HAP-1 (cell line): ENCODE measurements at regions of chr10 and their contacts with region 1.

Region 1: GRCh38 chr10:7410862-7411670 is at the start of gene SFMBT2:
- DNase-seq: peak; percentile 62 to 72
- H3K4me3 ChIP-seq: peak within 1 kb of the TSS; percentile 75
- H3K4me1 ChIP-seq: no peaks in the 10 kb centered on the region; the same call in 1 of the 2 replicates
- H3K27me3 ChIP-seq: no peaks in the 10 kb centered on the region

Region 2: DNA sequence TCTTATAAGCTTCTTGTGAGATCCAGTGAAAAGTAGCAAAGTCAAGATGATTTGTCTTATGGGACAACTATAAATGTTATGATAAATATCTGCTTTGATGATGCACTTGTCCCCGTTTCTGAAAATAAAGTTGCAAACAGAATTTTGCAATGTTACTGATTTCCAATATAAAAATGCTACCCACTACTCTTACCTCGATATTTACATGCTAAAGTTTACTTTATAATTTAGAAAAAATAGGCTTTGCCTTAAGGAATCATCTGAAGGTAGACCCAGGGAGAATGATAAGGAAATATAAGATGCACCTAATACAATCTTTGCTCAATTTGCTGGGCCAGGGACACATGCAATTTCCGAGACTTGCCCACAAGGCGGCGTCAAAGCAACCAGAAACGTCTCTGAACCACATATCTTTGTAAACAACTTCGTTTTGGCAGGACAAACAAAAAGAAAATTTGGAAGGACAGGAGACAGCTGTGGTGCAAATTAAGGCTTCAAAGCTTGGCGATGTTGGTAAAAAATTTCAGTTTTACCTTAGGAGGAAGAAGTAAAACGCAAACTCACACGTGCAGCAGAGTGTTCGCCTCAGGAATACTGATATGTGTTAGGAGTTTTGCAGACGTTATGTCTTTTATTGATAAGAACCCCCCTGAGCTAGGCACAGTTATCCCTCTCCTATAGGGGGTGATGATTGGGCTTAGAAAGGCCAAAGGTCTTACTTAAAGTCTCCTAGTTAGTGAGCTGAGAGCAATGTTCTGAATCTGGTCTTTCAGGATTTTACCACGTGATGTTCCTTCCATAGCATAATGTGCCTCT is 965.4 kb before region 1 on chr10:
- in situ Hi-C with region 1: loop called (anchors 25 kb)
- DNase-seq: peak; percentile 27 to 58
- H3K4me3 ChIP-seq: no peak overlapping the region
- H3K4me1 ChIP-seq: no peaks in the 10 kb centered on the region
- H3K27me3 ChIP-seq: no peaks in the 10 kb centered on the region

Region 3: GRCh38 chr10:6678211-6678803 is 732.8 kb before region 1 on chr10:
- in situ Hi-C with region 1: loop called (anchors 10 kb)
- DNase-seq: peak; percentile 60 to 79
- H3K4me3 ChIP-seq: no peak overlapping the region
- H3K4me1 ChIP-seq: peaks cover 3% of the 10 kb centered on the region; the same call in 1 of the 2 replicates
- H3K27me3 ChIP-seq: peaks cover 13% of the 10 kb centered on the region

Region 4: GRCh38 chr10:6920072-6921019 is 490.7 kb before region 1 on chr10:
- in situ Hi-C with region 1: loop called (anchors 25 kb)
- DNase-seq: peak; percentile 76 to 87
- H3K4me3 ChIP-seq: no peak overlapping the region
- H3K4me1 ChIP-seq: peaks cover 8% of the 10 kb centered on the region
- H3K27me3 ChIP-seq: no peaks in the 10 kb centered on the region

Region 5: DNA sequence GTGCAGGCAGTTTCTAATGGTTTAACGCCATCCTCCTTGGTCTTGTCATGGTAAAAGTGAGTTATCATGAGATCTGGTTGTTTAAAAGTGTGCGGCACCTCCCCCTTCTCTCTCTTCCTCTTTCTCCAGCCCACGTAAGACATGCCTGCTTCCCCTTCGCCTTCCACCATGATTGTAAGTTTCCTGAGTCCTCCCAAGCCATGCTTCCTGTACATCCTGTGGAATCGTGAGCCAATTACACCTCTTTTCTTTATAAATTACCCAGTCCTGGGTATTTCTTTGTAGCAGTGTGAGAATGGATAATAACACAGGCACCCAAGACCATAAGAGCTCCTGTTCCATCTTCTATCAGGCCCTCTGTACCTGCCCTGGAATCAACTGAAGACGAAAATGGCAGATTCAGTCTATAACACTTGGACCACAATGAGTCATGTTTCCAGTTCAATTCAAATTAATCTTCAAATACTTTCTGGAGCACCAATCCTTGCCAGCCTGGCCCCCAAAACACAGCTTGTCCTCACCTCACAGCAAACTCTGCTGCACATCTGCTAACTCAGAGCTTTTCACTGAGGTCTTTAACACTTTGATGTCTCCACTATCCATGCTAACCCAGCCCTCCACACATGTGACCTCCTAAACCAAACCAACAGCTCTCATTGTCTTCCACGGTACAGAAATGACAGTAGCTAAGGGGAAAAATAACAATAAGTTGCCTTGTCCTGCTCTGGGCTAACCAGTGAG is 73.5 kb before region 1 on chr10:
- in situ Hi-C with region 1: no loop called
- DNase-seq: no peak
- H3K4me3 ChIP-seq: no peak overlapping the region
- H3K4me1 ChIP-seq: peaks cover 5% of the 10 kb centered on the region
- H3K27me3 ChIP-seq: no peaks in the 10 kb centered on the region

Region 6: GRCh38 chr10:8006274-8006999 is 595.4 kb after region 1 on chr10:
- in situ Hi-C with region 1: no loop called
- DNase-seq: no peak
- H3K4me3 ChIP-seq: no peak overlapping the region
- H3K4me1 ChIP-seq: no peaks in the 10 kb centered on the region
- H3K27me3 ChIP-seq: no peaks in the 10 kb centered on the region